T-cell (primary cell): ENCODE measurements at regions of chr2 and their contacts with region 1.

Region 1: GRCh38 chr2:70226781-70227180 is 21.6 kb downstream of the TIA1 start:
- DNase-seq: no peak
- ATAC-seq: no peak
- H3K4me3 ChIP-seq: no peak overlapping the region
- H3K4me3 Mint-ChIP-seq: no peak overlapping the region
- H3K27ac ChIP-seq: no peak overlapping the region
- H3K27ac Mint-ChIP-seq: no peak overlapping the region
- H3K4me1 ChIP-seq: no peaks in the 10 kb centered on the region
- H3K4me1 Mint-ChIP-seq: peaks cover 0 to 8% (median 3%) of the 10 kb centered on the region in 3 donors
- H3K27me3 ChIP-seq: no peaks in the 10 kb centered on the region
- H3K27me3 Mint-ChIP-seq: no peaks in the 10 kb centered on the region

Region 2: DNA sequence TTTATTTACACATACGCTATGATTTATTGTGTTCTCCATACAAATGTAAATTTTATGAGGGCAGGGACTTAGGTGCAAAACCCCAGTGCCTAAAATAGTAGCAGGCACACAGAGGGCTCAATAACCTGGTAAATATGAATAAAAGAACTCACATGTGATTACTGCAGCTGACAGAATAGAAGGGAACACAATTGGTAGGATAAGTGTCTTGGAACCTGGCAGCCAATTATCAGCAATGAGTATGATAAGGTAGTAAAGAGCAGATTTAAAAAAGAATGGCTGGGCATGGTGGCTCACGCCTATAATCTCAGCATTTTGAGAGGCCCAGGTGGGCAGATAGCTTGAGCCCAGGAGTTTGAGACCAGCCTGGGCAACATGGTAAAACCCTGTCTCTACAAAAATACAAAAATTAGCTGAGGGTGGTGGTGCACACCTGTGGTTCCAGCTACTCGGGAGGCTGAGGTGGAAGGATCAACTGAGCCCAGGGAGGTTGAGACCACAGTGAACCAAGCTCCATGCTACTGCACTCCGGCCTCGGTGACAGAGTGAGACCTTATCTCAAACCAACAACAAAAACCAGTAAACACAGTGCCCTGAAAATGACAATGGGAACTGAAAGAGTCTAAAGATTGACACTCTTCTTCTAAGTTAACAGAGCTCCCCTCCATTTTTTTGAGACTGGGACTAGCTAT is 56.9 kb after region 1 on chr2:
- CTCF ChIA-PET with region 1: no interaction called
- POLR2A ChIA-PET with region 1: interaction called in 1 of 2 experiments, 20 read pairs
- DNase-seq: no peak
- ATAC-seq: no peak
- H3K4me3 ChIP-seq: no peak overlapping the region
- H3K4me3 Mint-ChIP-seq: no peak overlapping the region
- H3K27ac ChIP-seq: no peak overlapping the region
- H3K27ac Mint-ChIP-seq: peak overlapping the region; percentile 4 to 9
- H3K4me1 ChIP-seq: peaks cover 0 to 4% of the 10 kb centered on the region in 2 experiments
- H3K4me1 Mint-ChIP-seq: peaks cover 49 to 56% (median 53%) of the 10 kb centered on the region in 3 donors
- H3K27me3 ChIP-seq: no peaks in the 10 kb centered on the region
- H3K27me3 Mint-ChIP-seq: no peaks in the 10 kb centered on the region

Region 3: GRCh38 chr2:70806013-70806412 is 579.2 kb after region 1 on chr2:
- CTCF ChIA-PET with region 1: no interaction called
- POLR2A ChIA-PET with region 1: interaction called in 1 of 2 experiments, 12 read pairs
- DNase-seq: no peak
- ATAC-seq: no peak
- H3K4me3 ChIP-seq: no peak overlapping the region
- H3K4me3 Mint-ChIP-seq: no peak overlapping the region
- H3K27ac ChIP-seq: no peak overlapping the region
- H3K27ac Mint-ChIP-seq: no peak overlapping the region
- H3K4me1 ChIP-seq: no peaks in the 10 kb centered on the region
- H3K4me1 Mint-ChIP-seq: no peaks in the 10 kb centered on the region
- H3K27me3 ChIP-seq: peaks cover 0 to 10% of the 10 kb centered on the region in 2 experiments
- H3K27me3 Mint-ChIP-seq: peaks cover 5 to 11% of the 10 kb centered on the region in 2 donors